ENCODE measurements at regions of chr1 and their contacts with region 1.

Region 1: GRCh38 chr1:174999216-174999925 is 376 bp upstream of the CACYBP start:
- DNase-seq: peak; percentile 99
- H3K4me3 Mint-ChIP-seq: no peak overlapping the region
- H3K27ac Mint-ChIP-seq: no peak overlapping the region
- H3K4me1 Mint-ChIP-seq: peaks cover 37% of the 10 kb centered on the region
- H3K27me3 Mint-ChIP-seq: no peaks in the 10 kb centered on the region

Region 2: GRCh38 chr1:173476664-173477285 is 1522.6 kb before region 1 on chr1:
- intact Hi-C with region 1: loop called (anchors 5 kb)
- DNase-seq: peak; percentile 92
- H3K4me3 Mint-ChIP-seq: peak overlapping the region; percentile 92
- H3K27ac Mint-ChIP-seq: peak overlapping the region; percentile 96
- H3K4me1 Mint-ChIP-seq: peaks cover 48% of the 10 kb centered on the region
- H3K27me3 Mint-ChIP-seq: no peaks in the 10 kb centered on the region

Region 3: GRCh38 chr1:173824331-173825081 is 1174.9 kb before region 1 on chr1 and contains the starts of genes CENPL and DARS2:
- intact Hi-C with region 1: loop called (anchors 2 kb)
- DNase-seq: peak; percentile 97
- H3K4me3 Mint-ChIP-seq: peak within 1 kb of the TSS; percentile 99
- H3K27ac Mint-ChIP-seq: peak within 1 kb of the TSS; percentile 98
- H3K4me1 Mint-ChIP-seq: peaks cover 49% of the 10 kb centered on the region
- H3K27me3 Mint-ChIP-seq: no peaks in the 10 kb centered on the region
- total RNA-seq, gene CENPL: 23.2 and 24.4 TPM in 2 replicates
- total RNA-seq, gene DARS2: 47.6 and 52.2 TPM in 2 replicates

Region 4: DNA sequence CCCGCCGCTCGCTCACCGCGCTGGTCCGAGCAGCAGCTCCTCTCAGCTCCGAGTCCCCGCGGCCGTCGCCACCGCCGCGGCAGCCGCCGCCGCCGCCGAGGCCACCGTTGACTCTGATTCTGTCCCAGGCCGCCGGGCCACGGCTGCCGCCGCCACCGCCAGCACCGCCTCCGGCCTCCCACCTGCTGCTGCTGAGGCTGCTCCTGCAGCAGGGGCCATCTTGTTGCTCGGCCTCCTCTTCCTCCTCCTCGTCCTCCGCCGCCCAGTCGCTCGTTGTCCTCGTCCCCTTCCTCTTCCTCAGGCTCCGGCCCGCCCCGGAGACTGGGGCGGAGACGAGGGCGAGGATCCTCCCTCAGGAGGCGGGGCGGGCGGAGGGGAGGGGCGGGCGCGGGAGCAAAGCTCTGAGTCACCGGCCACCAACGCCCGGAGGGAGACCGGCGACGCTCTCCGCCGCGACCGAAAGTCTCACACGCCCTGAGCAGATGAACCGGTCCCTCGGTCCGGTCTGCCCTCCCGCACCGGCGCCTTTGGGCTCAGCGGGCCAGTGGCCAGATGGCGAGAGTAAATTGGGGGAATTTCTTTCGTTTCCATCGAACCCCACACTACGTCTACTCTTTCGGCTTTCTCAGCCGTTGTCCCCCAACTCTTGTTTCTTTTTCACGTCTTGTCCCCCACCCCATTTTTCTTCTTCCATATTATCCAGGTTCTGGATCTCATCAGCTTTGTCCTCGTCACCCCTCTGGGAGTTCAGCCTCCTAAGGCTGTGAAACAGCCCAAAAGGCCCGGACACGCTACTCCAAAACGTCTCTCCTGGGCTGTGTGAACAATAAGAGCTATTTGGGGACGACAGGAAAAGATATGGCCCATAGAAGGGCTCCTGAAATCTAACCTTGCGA is 977.0 kb before region 1 on chr1 and contains the start of gene RC3H1:
- intact Hi-C with region 1: loop called (anchors 1 kb)
- DNase-seq: peak; percentile 96
- H3K4me3 Mint-ChIP-seq: peak within 1 kb of the TSS; percentile 93
- H3K27ac Mint-ChIP-seq: peak within 1 kb of the TSS; percentile 94
- H3K4me1 Mint-ChIP-seq: peaks cover 33% of the 10 kb centered on the region
- H3K27me3 Mint-ChIP-seq: peaks cover 2% of the 10 kb centered on the region
- total RNA-seq, gene RC3H1: 41.7 and 43.3 TPM in 2 replicates

Region 5: DNA sequence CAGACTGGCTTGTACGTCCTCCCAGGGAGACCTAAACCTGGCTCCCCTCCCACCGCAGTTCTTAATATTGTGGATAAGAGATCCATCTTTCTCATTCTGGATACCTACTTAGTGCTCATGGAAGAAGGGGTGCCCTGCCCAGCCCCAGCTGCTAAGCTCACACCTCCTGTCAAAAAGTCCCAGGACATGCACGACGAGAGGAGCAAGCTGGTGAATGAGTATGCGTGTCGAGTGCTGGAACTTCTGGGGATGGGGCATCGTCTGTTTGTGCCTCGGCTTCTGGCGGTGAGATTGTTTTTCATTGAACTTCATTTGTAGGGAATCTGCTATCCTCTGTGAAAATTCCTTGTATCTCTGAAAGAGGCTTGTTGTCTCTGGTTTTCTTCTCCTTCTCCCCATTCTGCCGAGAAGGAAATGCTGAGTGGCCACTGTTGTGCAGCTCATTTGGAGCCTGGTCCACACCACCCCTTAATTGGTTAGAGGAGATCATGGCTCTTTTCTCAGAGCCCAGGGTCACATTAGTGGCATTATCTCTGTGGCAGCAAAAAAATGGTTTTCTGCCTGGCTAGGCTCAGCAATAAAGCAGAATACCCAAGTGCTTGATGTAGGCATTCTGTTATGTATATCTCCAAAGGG is 199.0 kb before region 1 on chr1:
- intact Hi-C with region 1: loop called (anchors 1 kb)
- DNase-seq: peak; percentile 74
- H3K4me3 Mint-ChIP-seq: no peak overlapping the region
- H3K27ac Mint-ChIP-seq: no peak overlapping the region
- H3K4me1 Mint-ChIP-seq: peaks cover 11% of the 10 kb centered on the region
- H3K27me3 Mint-ChIP-seq: no peaks in the 10 kb centered on the region

Region 6: DNA sequence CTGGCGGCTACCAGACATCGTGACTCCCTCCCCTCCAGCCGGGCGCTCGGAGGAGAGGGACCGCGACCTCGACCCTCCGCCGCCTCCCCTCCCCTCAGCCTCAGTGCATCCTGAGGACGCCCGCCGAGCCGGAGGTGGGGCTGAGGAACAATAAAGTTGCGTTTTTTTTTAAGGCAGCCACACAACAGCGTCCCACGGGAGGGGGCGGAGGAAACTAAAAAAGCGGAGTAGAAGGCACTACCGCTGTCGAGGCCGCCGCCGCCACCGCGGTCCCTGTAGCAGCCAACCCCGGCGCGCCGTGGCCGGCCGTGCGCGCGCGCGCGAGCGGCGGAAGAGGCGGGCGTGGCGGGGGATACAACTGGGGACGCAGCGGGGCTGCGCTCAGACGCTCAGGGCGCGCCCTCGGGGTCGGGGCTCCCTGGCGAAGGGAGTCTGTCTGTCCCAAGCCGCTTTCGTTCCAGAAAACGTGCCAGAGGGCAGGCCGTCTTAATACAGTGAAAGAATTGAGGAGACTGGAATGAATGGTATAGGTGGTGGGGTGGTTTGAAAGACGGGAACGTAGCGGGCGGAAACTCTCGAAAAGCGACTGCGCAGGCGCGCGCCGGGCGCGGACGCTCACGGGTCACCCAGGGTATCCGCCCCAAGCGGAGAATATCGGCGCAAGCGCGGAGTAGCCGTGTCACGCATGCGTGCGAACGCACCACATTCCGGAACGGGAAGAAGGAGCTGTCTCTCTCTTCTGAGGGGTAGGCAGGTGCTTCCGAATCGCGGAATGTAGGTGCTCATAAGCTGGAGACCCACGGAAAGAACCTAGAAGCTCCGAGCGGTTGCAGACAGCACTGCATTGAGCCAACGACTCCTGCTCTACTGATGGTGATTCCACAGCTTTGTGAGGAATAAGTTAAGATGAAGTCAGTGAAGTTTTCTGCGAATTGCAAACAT is 1207.9 kb after region 1 on chr1 and contains the start of gene COP1:
- intact Hi-C with region 1: loop called (anchors 2 kb)
- DNase-seq: peak; percentile 99
- H3K4me3 Mint-ChIP-seq: peak within 1 kb of the TSS; percentile 97
- H3K27ac Mint-ChIP-seq: peak within 1 kb of the TSS; percentile 97
- H3K4me1 Mint-ChIP-seq: peaks cover 22% of the 10 kb centered on the region
- H3K27me3 Mint-ChIP-seq: peaks cover 1% of the 10 kb centered on the region
- total RNA-seq, gene COP1: 48.6 and 51.4 TPM in 2 replicates

Measured in activated CD4-positive, alpha-beta T cell treated with anti-CD3 and anti-CD28 coated beads, Interleukin-2, amount 10 ng/mL, durations not matched to agents 24 days and 14 days (primary cell).